Heart left ventricle (tissue), 16 donors: ENCODE measurements at regions of chr7 and their contacts with region 1.

Region 1: GRCh38 chr7:104272767-104273384 is 55.5 kb upstream of the LHFPL3 start:
- DNase-seq: no peak
- ATAC-seq: no peak
- H3K4me3 ChIP-seq: no peak overlapping the region
- H3K27ac ChIP-seq: no peak overlapping the region
- H3K4me1 ChIP-seq: no peaks in the 10 kb centered on the region
- H3K27me3 ChIP-seq: no peaks in the 10 kb centered on the region
- CTCF ChIP-seq: peak in 11 of 12 donors; percentile 27 to 57 (median 42)
- POLR2A ChIP-seq: no peak

Region 2: GRCh38 chr7:104838537-104839299 is 565.8 kb after region 1 on chr7:
- intact Hi-C with region 1: loop called in 2 of 10 experiments (anchors 5 to 10 kb)
- DNase-seq: no peak
- ATAC-seq: no peak
- H3K4me3 ChIP-seq: no peak overlapping the region
- H3K27ac ChIP-seq: no peak overlapping the region
- H3K4me1 ChIP-seq: no peaks in the 10 kb centered on the region
- H3K27me3 ChIP-seq: peaks cover 0 to 20% (median 3%) of the 10 kb centered on the region in 9 donors
- CTCF ChIP-seq: no peak
- POLR2A ChIP-seq: no peak